OCI-LY7 (cell line): ENCODE measurements at regions of chr3 and their contacts with region 1.

Region 1: GRCh38 chr3:6250167-6250566 is 610.7 kb upstream of the GRM7 start:
- DNase-seq: peak; percentile 75
- H3K4me3 ChIP-seq: peak overlapping the region; percentile 50
- H3K27ac ChIP-seq: peak overlapping the region; percentile 66
- H3K4me1 ChIP-seq: peaks cover 29% of the 10 kb centered on the region
- CTCF ChIP-seq: no peak

Region 2: GRCh38 chr3:6282918-6283317 is 32.8 kb after region 1 on chr3:
- CTCF ChIA-PET with region 1: interaction called, 3 read pairs
- POLR2A ChIA-PET with region 1: interaction called, 8 read pairs
- intact Hi-C with region 1: loop called (anchors 2 kb)
- DNase-seq: peak; percentile 41
- H3K4me3 ChIP-seq: no peak overlapping the region
- H3K27ac ChIP-seq: peak overlapping the region; percentile 79
- H3K4me1 ChIP-seq: peaks cover 63% of the 10 kb centered on the region
- CTCF ChIP-seq: no peak

Region 3: GRCh38 chr3:6439226-6439625 is 189.1 kb after region 1 on chr3:
- CTCF ChIA-PET with region 1: no interaction called
- POLR2A ChIA-PET with region 1: no interaction called
- intact Hi-C with region 1: no loop called
- DNase-seq: no peak
- H3K4me3 ChIP-seq: no peak overlapping the region
- H3K27ac ChIP-seq: no peak overlapping the region
- H3K4me1 ChIP-seq: no peaks in the 10 kb centered on the region
- CTCF ChIP-seq: no peak

Region 4: DNA sequence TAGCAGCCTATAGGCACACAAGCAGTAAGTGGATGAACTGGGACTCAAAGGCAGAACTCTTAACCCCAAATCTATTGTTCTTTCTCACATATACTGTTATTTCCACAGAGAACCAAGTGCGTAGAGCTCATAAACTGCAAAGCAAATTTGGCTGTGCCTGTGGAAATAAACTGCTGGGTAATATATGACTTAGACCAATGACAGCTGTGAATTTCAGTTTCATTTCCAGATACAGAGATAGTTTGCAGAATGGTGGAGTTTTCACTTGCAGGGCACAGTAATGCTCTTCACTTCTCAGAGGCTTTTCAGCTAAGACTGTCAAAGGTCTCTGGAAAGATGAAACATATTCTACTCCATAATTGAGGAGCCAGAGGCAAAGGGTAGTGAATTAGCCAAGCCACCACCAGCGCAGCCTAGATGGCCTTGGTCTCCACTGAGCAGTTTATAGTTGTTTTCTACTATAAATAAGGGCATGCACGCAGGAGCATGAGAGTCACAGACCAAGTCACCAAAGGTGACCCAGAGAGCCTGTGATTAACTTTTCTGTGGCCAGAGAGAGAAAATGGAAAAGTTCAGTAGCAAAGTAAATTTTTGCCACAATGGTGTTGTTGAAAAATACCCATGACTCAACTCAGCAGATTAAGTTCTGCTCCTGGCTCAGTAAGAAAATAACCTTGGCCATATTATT is 430.1 kb after region 1 on chr3:
- CTCF ChIA-PET with region 1: no interaction called
- POLR2A ChIA-PET with region 1: no interaction called
- intact Hi-C with region 1: no loop called
- DNase-seq: peak; percentile 77
- H3K4me3 ChIP-seq: peak overlapping the region; percentile 46
- H3K27ac ChIP-seq: peak overlapping the region; percentile 74
- H3K4me1 ChIP-seq: peaks cover 28% of the 10 kb centered on the region
- CTCF ChIP-seq: no peak